BJ (cell line): ENCODE measurements at regions of chr10 and their contacts with region 1.

Region 1: DNA sequence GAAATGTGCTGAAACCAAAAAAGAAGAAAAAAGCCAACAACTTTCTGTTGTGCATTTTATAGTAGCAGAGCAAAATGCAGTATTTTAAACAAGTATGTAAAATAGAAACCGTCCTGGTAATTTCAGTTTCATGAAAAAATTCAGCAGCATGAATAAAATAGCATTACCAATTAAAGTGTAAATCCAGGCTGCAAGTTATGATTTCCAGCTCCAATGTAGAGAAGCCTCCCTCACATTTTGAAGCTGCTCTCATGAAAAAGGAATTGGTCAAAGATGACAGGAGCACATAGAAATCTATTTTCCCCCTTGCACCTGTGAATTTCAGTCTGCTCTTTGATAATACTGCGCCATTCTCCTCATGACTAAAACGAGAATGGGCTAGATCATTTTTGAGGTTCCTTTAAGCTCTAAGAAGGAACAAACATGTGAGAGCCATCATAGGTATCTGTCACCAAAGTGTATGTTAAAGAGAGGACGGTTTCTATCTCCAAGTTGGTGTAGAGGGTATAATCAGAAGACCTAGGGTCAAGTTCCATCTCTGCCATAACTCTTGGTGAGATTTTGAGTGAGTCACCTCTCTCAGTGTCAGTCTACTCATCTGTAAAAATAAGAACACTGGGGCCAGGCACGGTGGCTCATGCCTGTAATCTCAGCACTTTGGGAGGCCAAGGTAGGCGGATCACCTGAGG is 107.5 kb downstream of the MTPAP start:
- DNase-seq: no peak
- H3K4me3 ChIP-seq: no peak overlapping the region
- H3K27me3 ChIP-seq: no peaks in the 10 kb centered on the region
- CTCF ChIP-seq: no peak

Region 2: GRCh38 chr10:29386342-29386999 is 855.1 kb before region 1 on chr10:
- CTCF ChIA-PET with region 1: no interaction called
- POLR2A ChIA-PET with region 1: no interaction called
- DNase-seq: no peak
- H3K4me3 ChIP-seq: no peak overlapping the region
- H3K27me3 ChIP-seq: peaks cover 11% of the 10 kb centered on the region
- CTCF ChIP-seq: peak; percentile 67

Region 3: GRCh38 chr10:29714096-29714874 is 527.3 kb before region 1 on chr10:
- CTCF ChIA-PET with region 1: no interaction called
- POLR2A ChIA-PET with region 1: no interaction called
- DNase-seq: peak; percentile 37
- H3K4me3 ChIP-seq: no peak overlapping the region
- H3K27me3 ChIP-seq: no peaks in the 10 kb centered on the region
- CTCF ChIP-seq: no peak

Region 4: DNA sequence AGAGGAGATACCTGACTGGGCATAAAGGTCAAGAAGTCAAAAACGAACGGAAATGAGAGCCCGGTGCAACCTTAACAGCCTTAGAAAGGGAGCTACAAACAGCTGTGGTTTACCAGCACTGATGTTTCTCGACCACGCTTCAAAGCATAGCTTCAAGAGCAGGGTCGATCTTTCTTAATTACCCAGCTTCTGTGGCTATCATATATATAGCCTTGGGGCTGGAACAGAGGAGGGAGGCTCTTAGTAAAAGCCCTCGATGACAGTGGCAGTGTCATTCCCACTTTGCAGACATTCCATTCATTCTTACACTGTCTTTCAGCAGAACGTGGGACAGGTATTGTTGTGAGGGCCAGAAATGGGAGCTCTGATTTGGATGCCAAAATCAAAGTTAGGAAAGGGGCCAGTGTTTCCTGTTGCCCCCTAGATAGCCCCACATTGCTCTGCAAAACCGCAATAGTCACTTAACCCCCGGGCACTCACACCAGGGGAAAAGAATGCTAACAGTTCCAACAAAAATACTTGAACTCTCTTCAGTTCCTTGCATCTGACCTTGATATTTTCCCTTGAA is 34.0 kb before region 1 on chr10:
- CTCF ChIA-PET with region 1: interaction called, 12 read pairs
- POLR2A ChIA-PET with region 1: no interaction called
- DNase-seq: no peak
- H3K4me3 ChIP-seq: no peak overlapping the region
- H3K27me3 ChIP-seq: peaks cover 2% of the 10 kb centered on the region; the same call in 1 of the 2 replicates
- CTCF ChIP-seq: no peak

Region 5: GRCh38 chr10:30227481-30227880 is 14.1 kb before region 1 on chr10:
- CTCF ChIA-PET with region 1: interaction called, 11 read pairs
- POLR2A ChIA-PET with region 1: interaction called, 3 read pairs
- DNase-seq: no peak
- H3K4me3 ChIP-seq: no peak overlapping the region
- H3K27me3 ChIP-seq: no peaks in the 10 kb centered on the region; the same call in 1 of the 2 replicates
- CTCF ChIP-seq: no peak

Region 6: DNA sequence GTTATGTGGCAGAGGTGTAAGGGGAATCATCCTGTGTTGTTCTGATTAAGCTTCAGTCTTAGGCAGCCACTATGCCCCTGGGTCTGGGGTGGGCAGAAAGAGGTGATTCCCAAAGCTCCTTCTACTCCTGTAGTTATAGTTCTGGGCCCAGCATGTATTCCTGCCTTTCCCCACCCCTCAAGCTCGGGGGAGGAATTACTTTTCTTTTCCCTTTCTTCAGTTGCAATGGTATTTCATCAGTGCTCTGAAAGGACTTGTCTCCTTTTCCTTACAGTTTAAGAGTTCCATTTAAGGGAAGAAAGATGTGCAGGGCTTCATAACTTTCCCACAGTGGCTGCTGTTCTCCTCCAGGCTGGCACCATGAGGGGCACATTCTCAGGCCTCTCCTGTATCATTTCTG is 13.4 kb after region 1 on chr10:
- CTCF ChIA-PET with region 1: interaction called, 15 read pairs
- POLR2A ChIA-PET with region 1: no interaction called
- DNase-seq: no peak
- H3K4me3 ChIP-seq: no peak overlapping the region
- H3K27me3 ChIP-seq: no peaks in the 10 kb centered on the region
- CTCF ChIP-seq: no peak